Activated T-helper 1 cell treated with anti-CD3 and anti-CD28 coated beads, Interleukin-12 subunit alpha, Interleukin-12 subunit beta, Interleukin-2, Interleukin-4 antibody, amounts not matched to agents 30 ng/mL and 10 ng/mL and 1 ng/mL, durations not matched to agents 14 hours and 24 hours and 36 hours (primary cell): ENCODE measurements at regions of chr18 and their contacts with region 1.

Region 1: DNA sequence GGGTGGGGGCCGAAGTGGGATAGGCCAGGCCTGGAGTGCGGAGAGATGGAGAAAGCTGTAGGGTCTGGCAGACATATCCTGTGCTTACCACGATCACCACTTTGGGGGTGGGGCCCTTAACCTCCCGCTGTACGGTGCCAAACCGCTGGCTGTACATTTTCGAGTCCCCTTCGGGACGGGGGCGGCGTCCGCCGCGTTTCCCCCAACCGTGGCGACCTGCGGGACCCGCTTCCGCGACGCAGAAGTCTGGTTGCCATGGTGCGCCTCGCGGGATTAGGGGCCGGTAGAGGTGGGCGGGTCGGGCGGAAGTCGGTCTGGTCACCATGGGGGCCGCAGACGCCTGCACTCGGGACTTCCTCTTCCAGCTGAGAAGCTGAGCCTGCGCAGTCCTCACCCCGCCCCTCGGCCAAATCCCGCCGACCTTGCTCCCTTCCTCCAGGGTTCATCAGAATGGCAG is at the start of gene CFAP53:
- DNase-seq: peak; percentile 77
- H3K4me3 Mint-ChIP-seq: peak within 1 kb of the TSS; percentile 86
- H3K27ac Mint-ChIP-seq: peak within 1 kb of the TSS; percentile 70
- H3K4me1 Mint-ChIP-seq: peaks cover 30% of the 10 kb centered on the region
- H3K27me3 Mint-ChIP-seq: peaks cover 3% of the 10 kb centered on the region
- total RNA-seq, gene CFAP53: 0.31 and 0.34 TPM in 2 replicates

Region 2: GRCh38 chr18:50051288-50051687 is 215.0 kb before region 1 on chr18:
- intact Hi-C with region 1: no loop called
- DNase-seq: no peak
- H3K4me3 Mint-ChIP-seq: no peak overlapping the region
- H3K27ac Mint-ChIP-seq: no peak overlapping the region
- H3K4me1 Mint-ChIP-seq: no peaks in the 10 kb centered on the region
- H3K27me3 Mint-ChIP-seq: peaks cover 17% of the 10 kb centered on the region

Region 3: GRCh38 chr18:50194631-50195532 is 71.4 kb before region 1 on chr18 and contains the start of gene MYO5B:
- intact Hi-C with region 1: loop called (anchors 5 kb)
- DNase-seq: peak; percentile 24
- H3K4me3 Mint-ChIP-seq: peak within 1 kb of the TSS; percentile 62
- H3K27ac Mint-ChIP-seq: no peak within 1 kb of the TSS
- H3K4me1 Mint-ChIP-seq: peaks cover 7% of the 10 kb centered on the region
- H3K27me3 Mint-ChIP-seq: peaks cover 62% of the 10 kb centered on the region
- total RNA-seq, gene MYO5B: 0.12 TPM in 1 of 2 replicates, not detected in the other

Region 4: GRCh38 chr18:50281295-50281971 is 15.2 kb after region 1 on chr18 and contains the start of gene MBD1:
- intact Hi-C with region 1: loop called (anchors 1 kb)
- DNase-seq: peak; percentile 94
- H3K4me3 Mint-ChIP-seq: peak within 1 kb of the TSS; percentile 91
- H3K27ac Mint-ChIP-seq: peak within 1 kb of the TSS; percentile 87
- H3K4me1 Mint-ChIP-seq: peaks cover 40% of the 10 kb centered on the region
- H3K27me3 Mint-ChIP-seq: no peaks in the 10 kb centered on the region
- total RNA-seq, gene MBD1: 94.8 and 95.2 TPM in 2 replicates

Region 5: GRCh38 chr18:50356036-50356945 is 90.0 kb after region 1 on chr18:
- intact Hi-C with region 1: loop called (anchors 1 kb)
- DNase-seq: no peak
- H3K4me3 Mint-ChIP-seq: no peak overlapping the region
- H3K27ac Mint-ChIP-seq: peak overlapping the region; percentile 27
- H3K4me1 Mint-ChIP-seq: peaks cover 14% of the 10 kb centered on the region
- H3K27me3 Mint-ChIP-seq: peaks cover 25% of the 10 kb centered on the region

Region 6: GRCh38 chr18:50696929-50697328 is 430.7 kb after region 1 on chr18:
- intact Hi-C with region 1: no loop called
- DNase-seq: no peak
- H3K4me3 Mint-ChIP-seq: no peak overlapping the region
- H3K27ac Mint-ChIP-seq: no peak overlapping the region
- H3K4me1 Mint-ChIP-seq: no peaks in the 10 kb centered on the region
- H3K27me3 Mint-ChIP-seq: no peaks in the 10 kb centered on the region